Testis (tissue), 5 donors: ENCODE measurements at regions of chr20 and their contacts with region 1.

Region 1: GRCh38 chr20:34872622-34873224 is at the start of gene GGT7:
- DNase-seq: peak; percentile 87
- H3K4me3 ChIP-seq: peak within 1 kb of the TSS; percentile 59 to 74
- H3K27ac ChIP-seq: peak within 1 kb of the TSS in 1 of 2 donors; percentile 39
- H3K4me1 ChIP-seq: peaks cover 22% of the 10 kb centered on the region
- H3K27me3 ChIP-seq: no peaks in the 10 kb centered on the region
- CTCF ChIP-seq: peak; percentile 12 to 66 (median 61)
- POLR2A ChIP-seq: no peak
- total RNA-seq, gene GGT7: 22.6 to 24.1 TPM

Region 2: GRCh38 chr20:34955232-34956040 is 82.7 kb after region 1 on chr20 and contains the starts of genes GSS and MYH7B:
- intact Hi-C with region 1: loop called (anchors 5 kb)
- DNase-seq: peak; percentile 98
- H3K4me3 ChIP-seq: peak within 1 kb of the TSS; percentile 66 to 77
- H3K27ac ChIP-seq: peak within 1 kb of the TSS; percentile 87 to 88
- H3K4me1 ChIP-seq: peaks cover 5% of the 10 kb centered on the region
- H3K27me3 ChIP-seq: no peaks in the 10 kb centered on the region
- CTCF ChIP-seq: peak; percentile 26 to 39 (median 27)
- POLR2A ChIP-seq: peak; percentile 44
- total RNA-seq, gene GSS: 79.3 to 87.9 TPM
- total RNA-seq, gene MYH7B: 21.8 to 30.2 TPM

Region 3: DNA sequence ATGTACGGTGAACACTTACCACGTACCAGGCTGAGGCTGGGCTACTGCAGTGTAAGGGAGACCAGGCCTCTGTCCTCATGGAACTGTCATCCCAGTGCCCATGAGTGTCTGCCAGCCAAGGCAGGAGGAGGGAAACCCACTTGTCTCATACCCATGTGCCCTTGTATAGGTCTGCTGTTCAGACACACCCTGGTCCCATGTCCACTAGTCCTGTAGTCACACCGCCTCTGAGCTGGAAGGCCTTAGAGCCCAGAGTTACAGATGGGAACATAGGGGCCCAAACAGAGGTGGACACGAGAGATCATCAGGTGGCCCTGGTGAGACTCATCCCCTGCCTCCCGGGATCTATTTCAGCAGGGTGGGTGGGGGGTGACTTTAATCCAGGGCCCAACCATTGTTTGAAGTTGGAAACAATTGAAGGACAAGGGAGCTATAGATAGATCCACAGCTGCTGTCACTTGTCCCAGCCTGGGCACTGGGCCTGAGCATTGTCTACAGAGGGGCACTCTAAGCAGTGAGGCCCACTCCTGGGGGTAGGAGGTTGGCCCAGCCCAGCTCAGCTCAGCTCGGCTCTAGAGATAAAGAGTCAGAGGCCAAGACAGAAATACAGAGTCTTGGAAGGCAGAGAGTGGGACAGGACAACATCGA is 97.6 kb after region 1 on chr20:
- intact Hi-C with region 1: no loop called
- DNase-seq: no peak
- H3K4me3 ChIP-seq: no peak overlapping the region
- H3K27ac ChIP-seq: no peak overlapping the region
- H3K4me1 ChIP-seq: peaks cover 12% of the 10 kb centered on the region
- H3K27me3 ChIP-seq: no peaks in the 10 kb centered on the region
- CTCF ChIP-seq: no peak
- POLR2A ChIP-seq: no peak

Region 4: GRCh38 chr20:35092524-35093266 is 220.0 kb after region 1 on chr20 and contains the start of gene TRPC4AP:
- intact Hi-C with region 1: loop called (anchors 5 kb)
- DNase-seq: peak; percentile 94
- H3K4me3 ChIP-seq: peak within 1 kb of the TSS; percentile 83 to 91
- H3K27ac ChIP-seq: peak within 1 kb of the TSS; percentile 90 to 94
- H3K4me1 ChIP-seq: peaks cover 10% of the 10 kb centered on the region
- H3K27me3 ChIP-seq: no peaks in the 10 kb centered on the region
- CTCF ChIP-seq: peak; percentile 93 to 99 (median 98)
- POLR2A ChIP-seq: no peak
- total RNA-seq, gene TRPC4AP: 76.6 to 78.4 TPM